ENCODE measurements at regions of chr17 and their contacts with region 1.

Region 1: GRCh38 chr17:37438141-37438540 is 31.5 kb downstream of the TADA2A start:
- H3K4me3 ChIP-seq: no peak overlapping the region
- H3K27ac ChIP-seq: no peak overlapping the region
- H3K4me1 ChIP-seq: no peaks in the 10 kb centered on the region
- CTCF ChIP-seq: no peak

Region 2: GRCh38 chr17:37422971-37423625 is 15.0 kb before region 1 on chr17:
- CTCF ChIA-PET with region 1: interaction called, 11 read pairs
- POLR2A ChIA-PET with region 1: no interaction called
- H3K4me3 ChIP-seq: no peak overlapping the region
- H3K27ac ChIP-seq: no peak overlapping the region
- H3K4me1 ChIP-seq: peaks cover 5% of the 10 kb centered on the region; the same call in 1 of the 2 replicates
- CTCF ChIP-seq: no peak

Region 3: DNA sequence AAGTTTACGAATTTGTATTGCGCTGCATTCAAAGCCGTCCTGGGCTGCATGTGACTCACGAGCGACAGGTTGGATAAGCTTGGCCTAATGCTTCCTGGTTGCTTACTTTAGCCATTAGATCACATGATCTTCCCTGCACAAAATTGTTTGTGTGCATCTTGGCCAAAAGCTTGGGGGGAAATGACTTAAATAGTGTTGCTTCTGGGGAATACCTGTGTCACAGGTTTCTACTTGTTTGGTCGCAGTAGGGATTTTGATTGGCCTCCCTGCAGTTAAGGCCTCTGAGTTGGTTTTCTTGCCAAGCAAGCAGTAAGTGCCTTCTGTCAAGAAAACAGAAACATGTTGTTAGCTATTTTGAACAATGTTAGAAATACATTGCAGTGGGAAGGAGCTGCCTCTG is 12.0 kb after region 1 on chr17:
- CTCF ChIA-PET with region 1: interaction called, 17 read pairs
- POLR2A ChIA-PET with region 1: no interaction called
- H3K4me3 ChIP-seq: no peak overlapping the region
- H3K27ac ChIP-seq: no peak overlapping the region
- H3K4me1 ChIP-seq: peaks cover 6% of the 10 kb centered on the region; the same call in 1 of the 2 replicates
- CTCF ChIP-seq: no peak

Region 4: DNA sequence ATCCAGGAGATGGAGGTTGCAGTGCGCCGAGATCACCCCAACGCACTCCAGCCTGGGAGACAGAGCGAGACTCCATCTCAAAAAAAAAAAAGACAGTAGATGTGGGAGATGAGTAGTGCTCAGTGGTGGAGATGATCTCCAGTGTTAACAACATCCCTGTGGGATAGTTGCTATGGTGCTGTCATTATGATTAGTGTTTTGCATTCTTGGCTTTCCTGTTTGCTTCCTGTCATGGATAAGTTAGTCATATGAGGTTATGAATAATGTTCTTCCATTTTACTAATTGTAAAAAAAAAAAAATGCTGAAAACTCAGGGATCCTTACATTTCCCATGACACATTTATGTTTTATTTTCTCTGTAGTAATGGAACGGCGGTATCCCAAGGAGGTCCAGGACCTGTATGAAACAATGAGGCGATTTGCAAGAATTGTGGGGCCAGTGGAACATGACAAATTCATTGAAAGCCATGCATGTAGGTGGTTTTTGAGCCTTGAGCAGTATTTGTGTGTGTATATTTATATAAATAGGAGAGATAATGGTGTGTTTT is 27.0 kb after region 1 on chr17:
- CTCF ChIA-PET with region 1: no interaction called
- POLR2A ChIA-PET with region 1: no interaction called
- H3K4me3 ChIP-seq: no peak overlapping the region
- H3K27ac ChIP-seq: no peak overlapping the region
- H3K4me1 ChIP-seq: no peaks in the 10 kb centered on the region
- CTCF ChIP-seq: no peak

Measured in HEK293 (cell line).